CD8-positive, alpha-beta T cell (primary cell): ENCODE measurements at regions of chr14 and their contacts with region 1.

Region 1: GRCh38 chr14:24232121-24232644 is at the start of gene NEDD8:
- DNase-seq: peak; percentile 72 to 93 (median 89)
- ATAC-seq: peak; percentile 88
- H3K4me3 ChIP-seq: peak within 1 kb of the TSS; percentile 92 to 98
- H3K4me3 Mint-ChIP-seq: peak within 1 kb of the TSS; percentile 97
- H3K27ac ChIP-seq: peak within 1 kb of the TSS; percentile 72 to 87
- H3K27ac Mint-ChIP-seq: peak within 1 kb of the TSS; percentile 97
- H3K4me1 ChIP-seq: peaks cover 27% of the 10 kb centered on the region
- H3K4me1 Mint-ChIP-seq: peaks cover 59% of the 10 kb centered on the region
- H3K27me3 ChIP-seq: no peaks in the 10 kb centered on the region
- H3K27me3 Mint-ChIP-seq: no peaks in the 10 kb centered on the region
- CTCF ChIP-seq: no peak
- total RNA-seq, gene NEDD8: 39.9 to 48.5 TPM

Region 2: GRCh38 chr14:24135834-24136542 is 96.2 kb before region 1 on chr14 and contains the start of gene PSME1:
- CTCF ChIA-PET with region 1: no interaction called
- POLR2A ChIA-PET with region 1: interaction called, 3 read pairs
- intact Hi-C with region 1: loop called in 1 of 2 experiments (anchors 1 kb)
- DNase-seq: peak; percentile 89 to 97 (median 94)
- ATAC-seq: peak; percentile 98
- H3K4me3 ChIP-seq: peak within 1 kb of the TSS; percentile 78 to 91
- H3K4me3 Mint-ChIP-seq: peak within 1 kb of the TSS; percentile 90
- H3K27ac ChIP-seq: peak within 1 kb of the TSS; percentile 81 to 83
- H3K27ac Mint-ChIP-seq: peak within 1 kb of the TSS; percentile 93
- H3K4me1 ChIP-seq: peaks cover 54% of the 10 kb centered on the region
- H3K4me1 Mint-ChIP-seq: peaks cover 65% of the 10 kb centered on the region
- H3K27me3 ChIP-seq: no peaks in the 10 kb centered on the region
- H3K27me3 Mint-ChIP-seq: no peaks in the 10 kb centered on the region
- CTCF ChIP-seq: no peak
- total RNA-seq, gene PSME1: 200 to 207 TPM

Region 3: DNA sequence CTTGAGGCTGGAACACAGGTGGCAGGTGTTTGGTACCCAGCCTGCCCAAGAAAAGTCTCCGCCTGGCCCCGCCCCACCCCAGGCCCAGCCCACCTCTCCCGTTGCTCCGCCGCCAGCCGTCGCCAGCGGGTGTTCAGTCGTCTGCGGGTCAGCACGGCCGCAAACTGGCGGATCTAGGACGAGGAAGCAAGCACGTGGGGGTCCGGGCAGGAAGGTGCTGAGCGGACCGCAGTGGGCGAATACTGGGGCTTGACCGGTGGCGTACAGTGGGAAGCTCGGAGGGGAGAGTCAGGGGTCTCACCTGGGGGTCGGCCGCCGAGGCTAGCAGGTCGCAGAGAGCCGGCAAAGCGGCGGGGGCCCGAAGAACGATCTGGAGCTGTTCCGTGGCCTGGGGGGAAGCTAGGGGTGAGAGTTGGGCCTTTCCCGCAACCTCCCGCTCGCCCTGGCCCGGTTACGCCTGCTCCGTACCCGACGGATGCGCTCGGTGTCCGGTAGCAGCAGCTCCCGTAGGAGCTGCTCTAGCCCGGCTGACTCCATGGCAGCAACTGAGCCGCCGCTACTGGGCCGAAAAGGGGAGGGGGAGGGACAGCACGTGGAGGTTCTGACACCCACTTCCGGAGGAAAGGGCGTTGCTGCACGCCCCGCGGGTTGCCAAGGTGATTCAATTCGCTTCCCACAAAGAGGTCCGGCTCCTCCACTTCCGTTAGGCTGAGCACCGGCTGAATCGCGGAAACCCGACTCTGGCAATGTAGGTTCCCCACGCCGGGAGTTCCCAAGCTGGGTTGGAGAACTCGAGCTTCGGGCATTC is 43.7 kb before region 1 on chr14 and contains the start of gene IPO4:
- CTCF ChIA-PET with region 1: interaction called, 4 read pairs
- POLR2A ChIA-PET with region 1: no interaction called
- intact Hi-C with region 1: loop called in 1 of 2 experiments (anchors 1 kb)
- DNase-seq: peak; percentile 86 to 99 (median 94)
- ATAC-seq: peak; percentile 91
- H3K4me3 ChIP-seq: peak within 1 kb of the TSS; percentile 77 to 82
- H3K4me3 Mint-ChIP-seq: peak within 1 kb of the TSS; percentile 89
- H3K27ac ChIP-seq: peak within 1 kb of the TSS; percentile 61 to 89
- H3K27ac Mint-ChIP-seq: peak within 1 kb of the TSS; percentile 87
- H3K4me1 ChIP-seq: peaks cover 17% of the 10 kb centered on the region
- H3K4me1 Mint-ChIP-seq: peaks cover 38% of the 10 kb centered on the region
- H3K27me3 ChIP-seq: no peaks in the 10 kb centered on the region
- H3K27me3 Mint-ChIP-seq: no peaks in the 10 kb centered on the region
- CTCF ChIP-seq: no peak
- total RNA-seq, gene IPO4: 69.2 to 75.6 TPM

Region 4: GRCh38 chr14:24271134-24271833 is 39.1 kb after region 1 on chr14 and contains the start of gene RABGGTA:
- CTCF ChIA-PET with region 1: interaction called, 3 read pairs
- POLR2A ChIA-PET with region 1: interaction called, 4 read pairs
- intact Hi-C with region 1: loop called (anchors 1 kb)
- DNase-seq: peak; percentile 85 to 99 (median 91)
- ATAC-seq: peak; percentile 84
- H3K4me3 ChIP-seq: peak within 1 kb of the TSS; percentile 81 to 90
- H3K4me3 Mint-ChIP-seq: peak within 1 kb of the TSS; percentile 91
- H3K27ac ChIP-seq: peak within 1 kb of the TSS; percentile 93 to 97
- H3K27ac Mint-ChIP-seq: peak within 1 kb of the TSS; percentile 98
- H3K4me1 ChIP-seq: peaks cover 31% of the 10 kb centered on the region
- H3K4me1 Mint-ChIP-seq: peaks cover 36% of the 10 kb centered on the region
- H3K27me3 ChIP-seq: no peaks in the 10 kb centered on the region
- H3K27me3 Mint-ChIP-seq: no peaks in the 10 kb centered on the region
- CTCF ChIP-seq: peak; percentile 50
- total RNA-seq, gene RABGGTA: 59.1 to 65.9 TPM

Region 5: GRCh38 chr14:24442273-24443052 is 210.3 kb after region 1 on chr14 and contains the start of gene SDR39U1:
- CTCF ChIA-PET with region 1: no interaction called
- POLR2A ChIA-PET with region 1: no interaction called
- intact Hi-C with region 1: loop called (anchors 1 to 5 kb)
- DNase-seq: peak; percentile 93 to 100 (median 95)
- ATAC-seq: peak; percentile 89
- H3K4me3 ChIP-seq: peak within 1 kb of the TSS; percentile 77 to 89
- H3K4me3 Mint-ChIP-seq: peak within 1 kb of the TSS; percentile 95
- H3K27ac ChIP-seq: peak within 1 kb of the TSS; percentile 96
- H3K27ac Mint-ChIP-seq: peak within 1 kb of the TSS; percentile 97
- H3K4me1 ChIP-seq: peaks cover 35% of the 10 kb centered on the region
- H3K4me1 Mint-ChIP-seq: peaks cover 45% of the 10 kb centered on the region
- H3K27me3 ChIP-seq: no peaks in the 10 kb centered on the region
- H3K27me3 Mint-ChIP-seq: no peaks in the 10 kb centered on the region
- CTCF ChIP-seq: no peak
- total RNA-seq, gene SDR39U1: 75.0 to 84.4 TPM